PC-3 (cell line): ENCODE measurements at regions of chr10 and their contacts with region 1.

Region 1: GRCh38 chr10:62816331-62817120 is at the start of gene EGR2:
- DNase-seq: peak; percentile 100
- ATAC-seq: peak; percentile 76
- H3K4me3 ChIP-seq: peak within 1 kb of the TSS; percentile 69
- H3K27ac ChIP-seq: peak within 1 kb of the TSS; percentile 37
- H3K4me1 ChIP-seq: peaks cover 22% of the 10 kb centered on the region
- H3K27me3 ChIP-seq: no peaks in the 10 kb centered on the region
- CTCF ChIP-seq: no peak; the same call in 1 of the 2 replicates
- total RNA-seq, gene EGR2: 2.7 and 2.8 TPM in 2 replicates

Region 2: DNA sequence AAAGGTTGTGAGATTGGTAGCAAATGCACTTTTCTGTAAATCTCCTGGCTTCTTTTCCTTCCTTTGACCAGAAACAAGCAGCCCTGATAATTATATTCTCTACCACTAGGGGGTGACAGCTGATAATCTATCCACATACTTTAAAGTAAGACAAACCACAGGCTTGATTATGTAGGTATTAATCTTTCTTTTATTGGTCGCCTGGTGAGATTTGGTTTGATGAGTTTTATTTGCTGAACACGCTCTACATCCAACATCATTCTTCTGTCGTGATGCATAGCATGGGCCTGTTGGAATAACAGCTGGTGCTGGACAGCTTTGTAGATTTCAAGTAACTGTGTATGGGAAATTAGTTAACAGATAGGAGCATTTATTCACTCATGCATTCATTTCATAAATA is 378.8 kb before region 1 on chr10:
- CTCF ChIA-PET with region 1: interaction called, 4 read pairs
- POLR2A ChIA-PET with region 1: no interaction called
- intact Hi-C with region 1: loop called (anchors 1 kb)
- DNase-seq: peak; percentile 100
- ATAC-seq: peak; percentile 67
- H3K4me3 ChIP-seq: no peak overlapping the region
- H3K27ac ChIP-seq: no peak overlapping the region
- H3K4me1 ChIP-seq: peaks cover 24% of the 10 kb centered on the region
- H3K27me3 ChIP-seq: no peaks in the 10 kb centered on the region
- CTCF ChIP-seq: peak; percentile 100

Region 3: GRCh38 chr10:62610649-62611229 is 205.8 kb before region 1 on chr10:
- CTCF ChIA-PET with region 1: interaction called, 128 read pairs
- POLR2A ChIA-PET with region 1: interaction called, 4 read pairs
- intact Hi-C with region 1: loop called (anchors 1 kb)
- DNase-seq: peak; percentile 99
- ATAC-seq: peak; percentile 72
- H3K4me3 ChIP-seq: no peak overlapping the region
- H3K27ac ChIP-seq: no peak overlapping the region
- H3K4me1 ChIP-seq: peaks cover 29% of the 10 kb centered on the region
- H3K27me3 ChIP-seq: no peaks in the 10 kb centered on the region
- CTCF ChIP-seq: peak; percentile 100

Region 4: DNA sequence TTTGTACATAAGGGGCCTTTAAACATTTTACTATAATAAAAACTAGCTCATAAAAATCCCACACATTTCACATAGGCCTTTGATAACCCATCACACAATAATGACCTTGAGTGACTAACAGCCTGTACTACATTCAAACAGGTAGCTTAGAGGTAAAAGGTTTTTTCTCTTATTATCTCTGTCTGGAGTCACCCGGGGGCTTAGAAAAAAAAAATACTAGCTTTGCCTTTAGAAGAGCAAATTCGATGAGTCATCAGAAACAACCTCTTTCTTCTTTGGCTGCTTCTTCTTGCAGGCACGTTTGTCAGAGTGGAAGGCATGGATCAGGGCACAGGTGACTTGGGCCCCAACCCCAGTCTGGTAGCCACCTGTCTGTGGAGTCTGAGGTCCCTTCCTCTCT is 55.4 kb before region 1 on chr10:
- CTCF ChIA-PET with region 1: interaction called, 10 read pairs
- POLR2A ChIA-PET with region 1: no interaction called
- intact Hi-C with region 1: no loop called
- DNase-seq: peak; percentile 76
- ATAC-seq: peak; percentile 30
- H3K4me3 ChIP-seq: no peak overlapping the region
- H3K27ac ChIP-seq: no peak overlapping the region
- H3K4me1 ChIP-seq: peaks cover 12% of the 10 kb centered on the region
- H3K27me3 ChIP-seq: no peaks in the 10 kb centered on the region
- CTCF ChIP-seq: no peak

Region 5: GRCh38 chr10:62873866-62874265 is 57.3 kb after region 1 on chr10:
- CTCF ChIA-PET with region 1: interaction called, 10 read pairs
- POLR2A ChIA-PET with region 1: no interaction called
- intact Hi-C with region 1: no loop called
- DNase-seq: no peak
- ATAC-seq: no peak
- H3K4me3 ChIP-seq: no peak overlapping the region
- H3K27ac ChIP-seq: no peak overlapping the region
- H3K4me1 ChIP-seq: 0 out of 2 replicates have a peak, but pooled peaks cover under 1% of the 10 kb centered on the region
- H3K27me3 ChIP-seq: no peaks in the 10 kb centered on the region
- CTCF ChIP-seq: no peak

Region 6: DNA sequence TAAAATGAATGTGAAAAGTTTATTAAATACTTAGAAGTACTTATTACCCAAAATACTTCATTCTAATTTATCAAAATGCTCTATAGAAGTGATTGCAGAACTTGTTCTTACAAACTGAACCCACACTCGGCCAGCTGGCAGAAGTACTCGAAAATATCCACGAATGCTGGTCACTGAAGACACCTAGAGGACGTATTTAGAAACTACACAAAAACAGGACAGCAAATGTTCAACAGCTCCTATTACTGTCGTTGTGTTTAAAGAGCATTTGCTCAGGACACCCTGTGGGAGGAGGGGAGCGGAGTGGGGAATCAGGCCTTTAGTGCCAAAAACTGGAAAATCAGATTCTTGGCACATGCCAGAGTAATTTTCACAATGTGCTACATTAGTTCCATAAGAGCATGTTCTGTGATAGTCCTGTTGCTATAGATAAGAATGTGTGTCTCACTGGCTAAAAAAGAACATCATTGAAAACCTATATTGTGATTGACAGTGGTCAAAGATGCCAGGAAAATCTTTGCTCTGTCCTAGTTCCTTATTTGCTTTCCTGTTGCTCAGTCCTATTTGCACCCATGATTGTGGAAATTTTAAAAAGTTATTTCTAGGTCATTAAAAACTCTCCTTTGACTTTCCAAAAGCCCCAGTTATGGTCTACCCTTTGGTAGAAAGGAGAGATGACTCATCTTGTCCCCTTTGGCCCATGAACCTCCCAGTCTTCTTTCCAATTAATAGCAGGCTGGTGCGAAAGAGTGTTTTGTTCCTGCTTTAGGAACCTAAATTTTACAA is 267.6 kb after region 1 on chr10:
- CTCF ChIA-PET with region 1: interaction called, 21 read pairs
- POLR2A ChIA-PET with region 1: interaction called, 3 read pairs
- intact Hi-C with region 1: loop called (anchors 1 kb)
- DNase-seq: peak; percentile 99
- ATAC-seq: peak; percentile 95
- H3K4me3 ChIP-seq: no peak overlapping the region
- H3K27ac ChIP-seq: no peak overlapping the region
- H3K4me1 ChIP-seq: peaks cover 14% of the 10 kb centered on the region
- H3K27me3 ChIP-seq: no peaks in the 10 kb centered on the region
- CTCF ChIP-seq: peak; percentile 100

Region 7: GRCh38 chr10:63166742-63167258 is 350.3 kb after region 1 on chr10:
- CTCF ChIA-PET with region 1: interaction called, 10 read pairs
- POLR2A ChIA-PET with region 1: no interaction called
- intact Hi-C with region 1: no loop called
- DNase-seq: peak; percentile 99
- ATAC-seq: peak; percentile 70
- H3K4me3 ChIP-seq: no peak overlapping the region
- H3K27ac ChIP-seq: no peak overlapping the region
- H3K4me1 ChIP-seq: no peaks in the 10 kb centered on the region
- H3K27me3 ChIP-seq: no peaks in the 10 kb centered on the region
- CTCF ChIP-seq: peak; percentile 100